Right cardiac atrium (tissue), 5 donors: ENCODE measurements at regions of chr11 and their contacts with region 1.

Region 1: GRCh38 chr11:4187055-4187988 is 92.7 kb downstream of the RRM1 start:
- DNase-seq: peak; percentile 97 to 99 (median 98)
- ATAC-seq: peak; percentile 96 to 97
- H3K4me3 ChIP-seq: peak overlapping the region; percentile 43
- H3K27ac ChIP-seq: no peak overlapping the region
- H3K4me1 ChIP-seq: no peaks in the 10 kb centered on the region
- H3K27me3 ChIP-seq: no peaks in the 10 kb centered on the region

Region 2: GRCh38 chr11:4064278-4064955 is 122.9 kb before region 1 on chr11:
- intact Hi-C with region 1: no loop called
- DNase-seq: no peak
- ATAC-seq: peak in 1 of 2 donors; percentile 33
- H3K4me3 ChIP-seq: no peak overlapping the region
- H3K27ac ChIP-seq: no peak overlapping the region
- H3K4me1 ChIP-seq: peaks cover 6% of the 10 kb centered on the region
- H3K27me3 ChIP-seq: no peaks in the 10 kb centered on the region

Region 3: DNA sequence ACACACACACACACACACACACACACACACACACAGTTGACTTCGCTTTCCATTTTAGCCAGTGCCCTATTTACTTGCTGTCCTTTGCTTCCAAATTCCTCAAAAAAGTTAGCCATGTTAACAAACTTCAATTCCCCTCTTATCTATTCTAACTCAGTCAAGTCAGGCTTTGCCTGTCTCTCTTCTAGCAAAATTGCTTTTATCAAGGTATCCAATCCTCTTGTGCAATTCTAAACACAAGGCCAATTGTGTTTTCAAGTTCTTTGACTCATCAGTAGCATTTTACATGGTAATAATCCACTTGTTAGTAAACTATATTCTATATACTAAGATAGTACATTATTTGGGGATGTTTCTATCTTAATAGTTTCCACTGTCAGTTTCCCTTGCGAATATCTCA is 297.5 kb after region 1 on chr11:
- intact Hi-C with region 1: loop called in 3 of 4 experiments (anchors 5 kb)
- DNase-seq: no peak
- ATAC-seq: no peak
- H3K4me3 ChIP-seq: no peak overlapping the region
- H3K27ac ChIP-seq: no peak overlapping the region
- H3K4me1 ChIP-seq: no peaks in the 10 kb centered on the region
- H3K27me3 ChIP-seq: no peaks in the 10 kb centered on the region

Region 4: DNA sequence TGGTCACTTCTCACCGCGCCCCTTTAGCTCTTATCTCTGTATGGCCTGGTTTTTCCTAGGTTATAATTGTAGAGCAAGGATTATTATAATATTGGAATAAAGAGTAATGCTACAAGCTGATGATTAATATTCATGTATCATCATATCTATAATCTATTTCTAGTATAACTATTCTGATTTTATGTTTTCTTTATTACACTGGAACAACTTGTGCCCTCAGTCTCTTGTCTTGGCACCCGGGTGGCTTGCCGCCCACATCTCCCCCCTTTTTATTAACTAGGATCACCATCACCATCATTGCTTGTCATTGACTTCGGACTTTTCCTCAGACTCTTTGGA is 306.1 kb after region 1 on chr11:
- intact Hi-C with region 1: loop called (anchors 2 to 5 kb)
- DNase-seq: no peak
- ATAC-seq: no peak
- H3K4me3 ChIP-seq: no peak overlapping the region
- H3K27ac ChIP-seq: no peak overlapping the region
- H3K4me1 ChIP-seq: no peaks in the 10 kb centered on the region
- H3K27me3 ChIP-seq: peaks cover 2% of the 10 kb centered on the region

Region 5: GRCh38 chr11:4539603-4540219 is 352.4 kb after region 1 on chr11:
- intact Hi-C with region 1: loop called in 3 of 4 experiments (anchors 1 to 5 kb)
- DNase-seq: peak; percentile 30 to 74 (median 60)
- ATAC-seq: peak; percentile 60 to 63
- H3K4me3 ChIP-seq: no peak overlapping the region
- H3K27ac ChIP-seq: no peak overlapping the region
- H3K4me1 ChIP-seq: no peaks in the 10 kb centered on the region
- H3K27me3 ChIP-seq: no peaks in the 10 kb centered on the region